GM23248 (cell line): ENCODE measurements at regions of chr1 and their contacts with region 1.

Region 1: DNA sequence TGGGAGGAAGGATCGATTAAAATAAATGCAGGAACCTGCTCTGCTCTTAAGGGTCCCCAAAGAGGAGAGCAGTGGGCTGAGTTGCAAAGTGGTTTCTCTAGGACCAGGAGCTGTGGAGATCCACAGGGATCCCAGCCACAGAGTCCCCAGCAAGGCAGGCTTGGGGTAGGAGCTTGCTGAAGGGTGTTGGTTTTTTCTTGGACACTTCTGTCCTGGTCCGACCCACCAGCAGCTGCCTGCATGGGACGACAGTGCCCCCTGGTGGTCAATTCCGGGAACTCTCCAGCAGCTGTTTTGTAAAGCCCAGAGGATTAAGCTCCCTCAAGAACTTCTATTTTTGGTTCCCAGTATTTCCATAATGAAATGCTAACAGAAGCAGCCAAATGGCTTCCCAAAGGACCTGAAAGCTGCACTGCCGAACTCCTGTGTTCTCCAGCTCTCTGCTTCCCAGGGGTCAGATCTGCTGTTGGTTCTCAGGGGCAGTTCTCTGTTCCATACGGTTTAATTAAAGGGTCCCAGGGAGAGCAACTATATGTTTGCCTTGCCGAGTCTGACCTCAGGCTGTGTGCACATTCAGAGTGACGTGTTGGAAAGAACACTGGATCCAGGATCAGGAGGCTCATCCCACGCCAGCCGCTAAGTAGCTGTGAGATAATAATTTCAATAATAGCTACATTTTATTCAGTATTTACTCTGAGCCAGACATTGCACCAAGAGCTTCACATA is 23.2 kb downstream of the NENF start:
- DNase-seq: peak; percentile 76
- H3K4me3 ChIP-seq: no peak overlapping the region
- H3K27ac ChIP-seq: no peak overlapping the region
- H3K4me1 ChIP-seq: peaks cover 4% of the 10 kb centered on the region; the same call in 1 of the 2 replicates
- H3K27me3 ChIP-seq: no peaks in the 10 kb centered on the region

Region 2: DNA sequence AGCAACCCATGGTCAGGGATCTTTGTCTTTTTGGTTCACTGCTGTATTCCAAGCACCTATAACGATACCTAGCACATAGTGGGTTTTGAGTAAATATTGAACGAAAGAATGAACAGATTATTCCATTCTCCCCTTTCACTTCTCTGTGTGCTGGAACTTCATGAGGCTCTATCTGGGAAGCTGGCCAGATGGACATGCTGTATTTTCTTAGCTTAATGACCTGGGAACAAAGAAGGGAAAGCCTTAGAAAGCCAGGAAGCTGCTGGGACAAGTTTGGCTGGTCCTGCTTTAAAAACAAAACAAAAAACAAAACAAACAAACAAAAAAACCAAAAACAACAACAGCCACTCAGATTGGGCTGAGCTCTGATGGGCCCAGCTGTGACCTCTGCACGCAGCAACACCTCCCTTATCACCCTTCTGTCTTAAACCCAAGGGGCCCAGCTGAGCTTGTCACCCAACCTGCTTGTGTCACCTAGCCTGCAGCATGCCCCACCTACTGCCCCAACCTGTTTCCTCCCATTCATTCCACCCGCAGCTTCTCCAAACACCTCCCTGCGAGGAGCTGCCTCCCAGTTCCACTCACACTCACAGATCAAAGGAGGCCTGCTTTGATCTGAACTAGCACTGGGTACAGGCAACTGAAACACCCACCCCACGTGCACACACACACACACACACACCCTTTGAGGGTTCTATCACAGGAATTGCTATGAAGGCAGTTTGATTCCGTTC is 914.1 kb before region 1 on chr1:
- in situ Hi-C with region 1: no loop called
- DNase-seq: no peak
- H3K4me3 ChIP-seq: no peak overlapping the region
- H3K27ac ChIP-seq: no peak overlapping the region
- H3K4me1 ChIP-seq: no peaks in the 10 kb centered on the region; the same call in 1 of the 2 replicates
- H3K27me3 ChIP-seq: no peaks in the 10 kb centered on the region; the same call in 1 of the 2 replicates

Region 3: GRCh38 chr1:211680752-211681327 is 775.1 kb before region 1 on chr1:
- in situ Hi-C with region 1: loop called (anchors 10 kb)
- DNase-seq: peak; percentile 94
- H3K4me3 ChIP-seq: no peak overlapping the region
- H3K27ac ChIP-seq: no peak overlapping the region
- H3K4me1 ChIP-seq: peaks cover 4% of the 10 kb centered on the region; the same call in 1 of the 2 replicates
- H3K27me3 ChIP-seq: no peaks in the 10 kb centered on the region

Region 4: GRCh38 chr1:212062832-212063438 is 393.0 kb before region 1 on chr1:
- in situ Hi-C with region 1: loop called (anchors 10 kb)
- DNase-seq: peak; percentile 78
- H3K4me3 ChIP-seq: no peak overlapping the region
- H3K27ac ChIP-seq: no peak overlapping the region
- H3K4me1 ChIP-seq: no peaks in the 10 kb centered on the region
- H3K27me3 ChIP-seq: no peaks in the 10 kb centered on the region

Region 5: DNA sequence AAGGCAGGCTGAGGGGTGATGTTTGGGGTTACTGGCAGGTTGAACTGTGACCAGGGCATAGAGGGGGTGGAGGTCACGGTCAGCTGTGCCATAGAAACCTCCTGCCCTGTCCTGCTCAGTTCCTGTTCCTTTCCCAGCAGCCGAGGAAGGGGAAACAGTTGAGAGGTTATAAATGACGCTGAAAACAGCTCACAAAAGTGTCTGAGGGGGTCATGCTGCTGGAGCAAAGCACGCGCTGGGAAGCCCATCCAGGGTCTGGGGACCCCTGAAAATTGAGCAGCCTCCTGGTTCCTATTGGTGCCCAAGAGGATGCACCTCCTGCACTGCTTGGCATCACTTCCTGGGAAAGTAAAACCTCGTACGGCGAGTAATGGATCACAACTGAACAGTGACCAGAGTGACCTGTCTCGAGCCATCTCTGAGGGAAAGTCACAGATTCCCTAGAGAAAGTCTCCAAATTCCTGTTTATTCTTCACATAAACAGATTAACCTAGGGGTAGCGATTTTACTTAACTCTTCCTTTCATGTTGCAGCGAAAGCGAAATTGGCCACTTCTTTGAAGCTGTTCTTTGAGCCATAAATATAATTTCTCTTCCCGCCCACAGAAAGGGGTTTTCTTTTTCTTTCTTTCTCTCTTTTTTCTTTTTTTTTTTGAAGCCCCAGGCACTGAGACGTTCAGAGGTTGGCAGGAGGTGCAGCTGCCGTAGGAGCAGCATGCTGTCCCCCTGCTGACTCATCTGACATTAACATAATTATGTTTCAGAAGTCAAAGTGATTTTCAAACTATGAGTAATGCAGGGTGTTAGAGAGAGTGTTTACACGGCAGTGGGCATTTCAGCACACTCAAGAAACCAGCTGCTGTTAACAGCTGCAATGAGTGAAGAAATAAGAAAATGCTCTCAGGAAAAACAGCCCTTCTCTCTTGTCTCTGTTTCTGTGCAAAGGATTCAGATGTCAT is 110.8 kb after region 1 on chr1:
- in situ Hi-C with region 1: no loop called
- DNase-seq: peak; percentile 88
- H3K4me3 ChIP-seq: peak overlapping the region; percentile 71
- H3K27ac ChIP-seq: no peak overlapping the region
- H3K4me1 ChIP-seq: peaks cover 6% of the 10 kb centered on the region
- H3K27me3 ChIP-seq: peaks cover 30% of the 10 kb centered on the region